Activated CD4-positive, alpha-beta memory T cell treated with anti-CD3 and anti-CD28 coated beads for 36 hours (primary cell): ENCODE measurements at regions of chr1 and their contacts with region 1.

Region 1: GRCh38 chr1:204398217-204399081 is 13.2 kb downstream of the PPP1R15B start:
- DNase-seq: peak; percentile 63
- H3K4me3 Mint-ChIP-seq: no peak overlapping the region
- H3K27ac Mint-ChIP-seq: peak overlapping the region; percentile 78
- H3K4me1 Mint-ChIP-seq: peaks cover 3% of the 10 kb centered on the region
- H3K27me3 Mint-ChIP-seq: no peaks in the 10 kb centered on the region

Region 2: DNA sequence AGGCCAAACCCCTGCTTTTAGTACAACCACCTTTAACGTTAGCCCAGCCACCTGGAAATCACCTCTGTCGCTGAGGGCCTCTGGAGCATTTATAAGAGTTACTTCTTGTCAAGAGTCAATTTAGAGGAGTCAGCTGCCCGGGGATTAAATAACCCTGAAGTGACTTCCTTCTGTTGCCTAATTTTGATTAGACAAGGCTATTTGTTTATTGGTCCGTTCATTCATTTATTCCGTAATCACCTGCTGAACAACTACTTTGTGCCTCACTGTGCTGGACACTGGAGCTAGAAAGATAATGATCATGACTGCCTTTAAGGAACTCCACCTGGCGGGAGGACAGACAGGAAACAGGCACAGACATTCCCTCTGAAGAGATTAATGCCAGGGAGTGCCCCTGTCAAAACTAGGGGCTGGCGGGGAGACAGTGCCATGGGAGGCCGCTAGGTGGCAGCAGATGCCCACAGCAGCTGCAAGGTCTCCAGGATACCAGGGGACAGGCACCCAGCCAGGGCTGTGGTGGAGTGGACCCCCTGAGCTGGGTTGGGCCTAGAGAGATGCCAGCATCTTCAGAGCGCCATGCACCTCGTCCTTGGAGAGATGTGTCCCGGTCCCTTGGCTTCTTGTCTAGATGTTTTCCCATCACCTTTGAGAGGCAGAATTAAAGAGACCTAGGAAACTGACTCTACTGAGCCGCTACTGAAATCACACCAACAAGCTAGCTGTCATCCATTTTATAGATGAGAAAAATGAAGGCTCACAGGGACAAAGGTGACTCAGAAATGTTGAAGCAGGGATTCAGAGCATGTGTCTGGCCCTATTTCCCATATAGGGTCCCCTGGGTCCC is 236.0 kb before region 1 on chr1:
- CTCF ChIA-PET with region 1: interaction called, 68 read pairs
- POLR2A ChIA-PET with region 1: no interaction called
- intact Hi-C with region 1: loop called (anchors 1 kb)
- DNase-seq: peak; percentile 86
- H3K4me3 Mint-ChIP-seq: no peak overlapping the region
- H3K27ac Mint-ChIP-seq: no peak overlapping the region
- H3K4me1 Mint-ChIP-seq: no peaks in the 10 kb centered on the region
- H3K27me3 Mint-ChIP-seq: peaks cover 6% of the 10 kb centered on the region

Region 3: GRCh38 chr1:204323887-204324286 is 74.6 kb before region 1 on chr1:
- CTCF ChIA-PET with region 1: interaction called, 11 read pairs
- POLR2A ChIA-PET with region 1: no interaction called
- intact Hi-C with region 1: no loop called
- DNase-seq: peak; percentile 84
- H3K4me3 Mint-ChIP-seq: no peak overlapping the region
- H3K27ac Mint-ChIP-seq: peak overlapping the region; percentile 68
- H3K4me1 Mint-ChIP-seq: peaks cover 30% of the 10 kb centered on the region
- H3K27me3 Mint-ChIP-seq: peaks cover 10% of the 10 kb centered on the region

Region 4: DNA sequence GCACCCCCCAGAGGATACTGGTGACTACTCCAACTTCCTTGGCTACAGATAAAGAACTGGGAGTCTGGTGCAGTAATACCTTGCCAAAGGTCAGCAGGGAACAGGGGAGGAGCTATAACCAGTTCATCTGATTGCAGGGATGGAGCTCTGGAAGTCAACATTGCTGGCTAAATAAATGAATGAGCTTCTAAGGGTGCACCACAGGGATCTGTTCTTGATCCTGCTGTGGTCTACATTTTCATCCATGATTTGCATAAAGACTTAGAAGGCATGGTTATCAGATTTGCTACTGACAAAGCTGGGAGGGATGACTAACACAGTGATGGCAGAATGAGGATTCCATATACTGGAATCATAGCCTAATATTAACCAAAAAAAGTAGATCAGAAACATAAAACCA is 57.1 kb before region 1 on chr1:
- CTCF ChIA-PET with region 1: no interaction called
- POLR2A ChIA-PET with region 1: no interaction called
- intact Hi-C with region 1: no loop called
- DNase-seq: no peak
- H3K4me3 Mint-ChIP-seq: no peak overlapping the region
- H3K27ac Mint-ChIP-seq: no peak overlapping the region
- H3K4me1 Mint-ChIP-seq: no peaks in the 10 kb centered on the region
- H3K27me3 Mint-ChIP-seq: peaks cover 3% of the 10 kb centered on the region

Region 5: GRCh38 chr1:204377795-204378608 is 20.4 kb before region 1 on chr1:
- CTCF ChIA-PET with region 1: interaction called, 62 read pairs
- POLR2A ChIA-PET with region 1: no interaction called
- intact Hi-C with region 1: no loop called
- DNase-seq: peak; percentile 58
- H3K4me3 Mint-ChIP-seq: peak overlapping the region; percentile 79
- H3K27ac Mint-ChIP-seq: no peak overlapping the region
- H3K4me1 Mint-ChIP-seq: peaks cover 13% of the 10 kb centered on the region
- H3K27me3 Mint-ChIP-seq: peaks cover 16% of the 10 kb centered on the region

Region 6: GRCh38 chr1:204431310-204432165 is 33.1 kb after region 1 on chr1:
- CTCF ChIA-PET with region 1: interaction called, 11 read pairs
- POLR2A ChIA-PET with region 1: no interaction called
- intact Hi-C with region 1: no loop called
- DNase-seq: peak; percentile 87
- H3K4me3 Mint-ChIP-seq: no peak overlapping the region
- H3K27ac Mint-ChIP-seq: no peak overlapping the region
- H3K4me1 Mint-ChIP-seq: peaks cover 8% of the 10 kb centered on the region
- H3K27me3 Mint-ChIP-seq: no peaks in the 10 kb centered on the region

Region 7: DNA sequence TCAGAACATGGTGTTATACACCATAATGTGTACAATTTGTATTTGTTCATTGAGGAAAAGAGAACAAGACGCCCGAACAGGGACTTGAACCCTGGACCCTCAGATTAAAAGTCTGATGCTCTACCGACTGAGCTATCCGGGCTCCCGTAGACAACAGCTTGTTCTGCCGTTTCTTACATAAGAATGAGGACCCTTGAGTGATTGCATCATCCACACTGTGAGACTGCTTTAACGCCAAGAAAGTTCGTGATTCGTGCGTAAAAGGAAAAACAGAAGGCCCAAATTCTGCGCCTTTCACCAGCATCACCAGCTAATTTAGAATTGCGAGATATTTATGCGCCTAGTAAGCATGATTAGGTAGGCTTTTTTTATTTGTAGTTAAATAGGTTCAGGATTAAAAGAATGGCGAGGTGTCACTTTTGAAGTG is 108.5 kb after region 1 on chr1:
- CTCF ChIA-PET with region 1: interaction called, 38 read pairs
- POLR2A ChIA-PET with region 1: interaction called, 3 read pairs
- intact Hi-C with region 1: no loop called
- DNase-seq: peak; percentile 93
- H3K4me3 Mint-ChIP-seq: peak overlapping the region; percentile 91
- H3K27ac Mint-ChIP-seq: peak overlapping the region; percentile 98
- H3K4me1 Mint-ChIP-seq: peaks cover 24% of the 10 kb centered on the region
- H3K27me3 Mint-ChIP-seq: peaks cover 4% of the 10 kb centered on the region